ENCODE measurements at regions of chr1 and their contacts with region 1.

Region 1: DNA sequence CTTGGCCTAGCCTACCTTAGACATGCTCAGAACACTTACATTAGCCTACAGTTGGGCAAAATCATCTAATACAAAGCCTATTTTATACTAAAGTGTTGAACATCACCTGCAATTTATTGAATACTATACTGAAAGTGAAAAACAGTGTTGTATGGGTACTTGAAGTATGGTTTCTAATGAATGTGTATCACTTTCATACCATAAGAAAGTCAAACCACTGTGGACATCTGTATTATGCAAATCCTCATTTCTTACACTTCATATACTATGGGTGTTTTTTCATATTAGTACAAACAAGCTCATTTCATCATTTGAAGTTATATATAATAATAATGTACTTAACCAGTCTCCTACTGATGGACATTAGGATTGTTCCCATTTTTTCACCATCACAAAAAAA is 41.2 kb downstream of the TDRD5 start:
- DNase-seq: no peak
- H3K4me3 ChIP-seq: no peak overlapping the region
- H3K27ac ChIP-seq: no peak overlapping the region
- H3K4me1 ChIP-seq: no peaks in the 10 kb centered on the region
- H3K27me3 ChIP-seq: no peaks in the 10 kb centered on the region
- CTCF ChIP-seq: no peak
- EP300 ChIP-seq: no peak
- POLR2A ChIP-seq: no peak

Region 2: GRCh38 chr1:177703888-177704446 is 1928.9 kb before region 1 on chr1:
- intact Hi-C with region 1: loop called in 1 of 4 experiments (anchors 10 kb)
- DNase-seq: no peak
- H3K4me3 ChIP-seq: no peak overlapping the region
- H3K27ac ChIP-seq: no peak overlapping the region
- H3K4me1 ChIP-seq: no peaks in the 10 kb centered on the region
- H3K27me3 ChIP-seq: no peaks in the 10 kb centered on the region
- CTCF ChIP-seq: no peak
- EP300 ChIP-seq: no peak
- POLR2A ChIP-seq: no peak

Region 3: GRCh38 chr1:179770884-179771502 is 138.1 kb after region 1 on chr1:
- intact Hi-C with region 1: no loop called
- DNase-seq: no peak
- H3K4me3 ChIP-seq: no peak overlapping the region
- H3K27ac ChIP-seq: no peak overlapping the region
- H3K4me1 ChIP-seq: no peaks in the 10 kb centered on the region
- H3K27me3 ChIP-seq: no peaks in the 10 kb centered on the region
- CTCF ChIP-seq: no peak
- EP300 ChIP-seq: no peak
- POLR2A ChIP-seq: no peak

Region 4: DNA sequence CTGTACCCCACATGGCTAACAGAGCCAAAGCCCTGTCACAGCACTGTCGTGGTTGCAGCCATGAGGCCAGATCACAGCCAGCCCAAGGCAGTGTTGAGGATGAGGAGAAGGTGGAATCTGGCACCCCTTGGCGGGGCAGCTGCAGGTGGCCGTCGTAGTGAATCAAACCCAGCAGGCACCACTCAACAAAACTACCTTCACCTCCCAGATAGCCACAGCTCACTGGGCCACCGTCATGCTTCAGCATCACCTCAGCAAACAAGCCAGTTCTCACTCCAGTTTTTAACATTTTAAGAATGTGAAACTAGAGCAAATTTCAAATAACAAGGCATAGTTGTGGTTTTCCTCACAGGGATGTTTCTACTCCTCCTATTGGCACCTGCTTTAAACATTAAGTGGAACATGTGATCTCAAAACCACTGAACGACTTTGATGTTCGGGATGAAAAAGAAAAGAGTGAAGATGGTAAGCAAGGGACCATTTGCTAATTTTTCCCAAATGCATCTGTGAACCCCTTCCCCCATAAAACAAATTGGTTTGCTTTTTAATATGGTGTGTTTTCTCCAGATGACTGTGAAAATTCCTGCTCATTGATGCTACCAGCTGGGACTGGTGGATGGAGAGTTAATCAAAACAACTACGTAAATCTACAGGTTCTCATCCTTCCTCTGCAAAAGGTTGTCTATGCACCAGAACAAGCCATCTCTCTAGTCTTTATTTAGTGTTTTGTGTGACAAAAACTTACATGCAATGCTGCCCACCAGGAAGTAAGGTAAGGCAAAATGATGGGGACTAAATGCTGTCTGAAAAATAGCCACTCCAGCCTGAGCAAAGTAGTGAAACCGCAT is 199.2 kb after region 1 on chr1:
- intact Hi-C with region 1: no loop called
- DNase-seq: no peak
- H3K4me3 ChIP-seq: no peak overlapping the region
- H3K27ac ChIP-seq: no peak overlapping the region
- H3K4me1 ChIP-seq: peaks cover 3% of the 10 kb centered on the region
- H3K27me3 ChIP-seq: no peaks in the 10 kb centered on the region
- CTCF ChIP-seq: no peak
- EP300 ChIP-seq: no peak
- POLR2A ChIP-seq: no peak